CD4-positive, alpha-beta memory T cell (primary cell): ENCODE measurements at regions of chr22 and their contacts with region 1.

Region 1: GRCh38 chr22:24433813-24434470 is 6.5 kb downstream of the ADORA2A start:
- DNase-seq: peak in 1 of 5 donors; percentile 85
- H3K4me3 ChIP-seq: no peak overlapping the region
- H3K4me3 Mint-ChIP-seq: peak overlapping the region; percentile 52 to 88 (median 70)
- H3K27ac ChIP-seq: peak overlapping the region; percentile 59
- H3K27ac Mint-ChIP-seq: peak overlapping the region; percentile 87 to 100 (median 92)
- H3K4me1 ChIP-seq: peaks cover 89% of the 10 kb centered on the region
- H3K4me1 Mint-ChIP-seq: peaks cover 41 to 92% (median 75%) of the 10 kb centered on the region in 4 donors
- H3K27me3 ChIP-seq: no peaks in the 10 kb centered on the region
- H3K27me3 Mint-ChIP-seq: peaks cover 0 to 3% of the 10 kb centered on the region in 2 donors

Region 2: DNA sequence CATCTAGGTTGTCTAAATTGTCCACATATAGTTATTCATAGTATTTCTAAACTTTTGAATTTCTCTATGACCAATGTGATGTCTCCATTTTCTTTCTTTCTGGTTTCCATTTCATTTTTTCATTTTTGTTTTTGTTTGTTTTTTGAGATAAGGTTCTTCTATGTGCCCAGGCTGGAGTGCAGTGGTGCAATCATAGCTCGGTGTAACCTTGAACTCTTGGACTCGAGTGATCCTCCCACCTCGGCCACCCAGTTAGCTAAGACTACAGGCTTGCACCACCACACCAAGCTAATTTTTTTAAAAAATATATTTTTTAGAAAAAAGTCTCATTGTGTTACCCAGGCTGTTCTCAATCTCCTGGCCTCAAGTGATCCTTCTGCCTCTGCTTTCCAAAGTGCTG is 436.9 kb before region 1 on chr22:
- CTCF ChIA-PET with region 1: no interaction called
- POLR2A ChIA-PET with region 1: no interaction called
- intact Hi-C with region 1: no loop called
- DNase-seq: no peak
- H3K4me3 ChIP-seq: no peak overlapping the region
- H3K4me3 Mint-ChIP-seq: no peak overlapping the region
- H3K27ac ChIP-seq: no peak overlapping the region
- H3K27ac Mint-ChIP-seq: peak overlapping the region in 1 of 7 donors; percentile 11
- H3K4me1 ChIP-seq: no peaks in the 10 kb centered on the region
- H3K4me1 Mint-ChIP-seq: peaks cover 0 to 3% (median 0%) of the 10 kb centered on the region in 4 donors
- H3K27me3 ChIP-seq: no peaks in the 10 kb centered on the region
- H3K27me3 Mint-ChIP-seq: peaks cover 0 to 1% of the 10 kb centered on the region in 2 donors

Region 3: GRCh38 chr22:24011735-24012068 is 422.2 kb before region 1 on chr22:
- CTCF ChIA-PET with region 1: no interaction called
- POLR2A ChIA-PET with region 1: no interaction called
- intact Hi-C with region 1: loop called (anchors 5 kb)
- DNase-seq: peak in 1 of 5 donors; percentile 6
- H3K4me3 ChIP-seq: peak overlapping the region; percentile 68 to 86
- H3K4me3 Mint-ChIP-seq: peak overlapping the region; percentile 94 to 98 (median 98)
- H3K27ac ChIP-seq: peak overlapping the region; percentile 78
- H3K27ac Mint-ChIP-seq: peak overlapping the region; percentile 94 to 99 (median 97)
- H3K4me1 ChIP-seq: peaks cover 23% of the 10 kb centered on the region
- H3K4me1 Mint-ChIP-seq: peaks cover 26 to 57% (median 35%) of the 10 kb centered on the region in 4 donors
- H3K27me3 ChIP-seq: no peaks in the 10 kb centered on the region
- H3K27me3 Mint-ChIP-seq: peaks cover 0 to 5% of the 10 kb centered on the region in 2 donors

Region 4: GRCh38 chr22:24445481-24446259 is 11.7 kb after region 1 on chr22:
- CTCF ChIA-PET with region 1: no interaction called
- POLR2A ChIA-PET with region 1: interaction called, 10 read pairs
- intact Hi-C with region 1: no loop called
- DNase-seq: no peak
- H3K4me3 ChIP-seq: no peak overlapping the region
- H3K4me3 Mint-ChIP-seq: no peak overlapping the region
- H3K27ac ChIP-seq: no peak overlapping the region
- H3K27ac Mint-ChIP-seq: no peak overlapping the region
- H3K4me1 ChIP-seq: no peaks in the 10 kb centered on the region
- H3K4me1 Mint-ChIP-seq: peaks cover 7 to 25% (median 13%) of the 10 kb centered on the region in 4 donors
- H3K27me3 ChIP-seq: no peaks in the 10 kb centered on the region
- H3K27me3 Mint-ChIP-seq: no peaks in the 10 kb centered on the region

Region 5: GRCh38 chr22:24492391-24492790 is 58.4 kb after region 1 on chr22:
- CTCF ChIA-PET with region 1: no interaction called
- POLR2A ChIA-PET with region 1: no interaction called
- intact Hi-C with region 1: no loop called
- DNase-seq: no peak
- H3K4me3 ChIP-seq: no peak overlapping the region
- H3K4me3 Mint-ChIP-seq: no peak overlapping the region
- H3K27ac ChIP-seq: no peak overlapping the region
- H3K27ac Mint-ChIP-seq: no peak overlapping the region
- H3K4me1 ChIP-seq: no peaks in the 10 kb centered on the region
- H3K4me1 Mint-ChIP-seq: peaks cover 0 to 3% (median under 1%) of the 10 kb centered on the region in 4 donors
- H3K27me3 ChIP-seq: peaks cover 5% of the 10 kb centered on the region
- H3K27me3 Mint-ChIP-seq: peaks cover 9 to 10% of the 10 kb centered on the region in 2 donors

Region 6: GRCh38 chr22:24503137-24503842 is 69.3 kb after region 1 on chr22:
- CTCF ChIA-PET with region 1: interaction called, 12 read pairs
- POLR2A ChIA-PET with region 1: no interaction called
- intact Hi-C with region 1: no loop called
- DNase-seq: peak; percentile 41 to 47 (median 45)
- H3K4me3 ChIP-seq: no peak overlapping the region
- H3K4me3 Mint-ChIP-seq: no peak overlapping the region
- H3K27ac ChIP-seq: no peak overlapping the region
- H3K27ac Mint-ChIP-seq: peak overlapping the region in 2 of 7 donors; percentile 1 to 25
- H3K4me1 ChIP-seq: no peaks in the 10 kb centered on the region
- H3K4me1 Mint-ChIP-seq: peaks cover 0 to 4% (median 2%) of the 10 kb centered on the region in 4 donors
- H3K27me3 ChIP-seq: no peaks in the 10 kb centered on the region
- H3K27me3 Mint-ChIP-seq: no peaks in the 10 kb centered on the region

Region 7: DNA sequence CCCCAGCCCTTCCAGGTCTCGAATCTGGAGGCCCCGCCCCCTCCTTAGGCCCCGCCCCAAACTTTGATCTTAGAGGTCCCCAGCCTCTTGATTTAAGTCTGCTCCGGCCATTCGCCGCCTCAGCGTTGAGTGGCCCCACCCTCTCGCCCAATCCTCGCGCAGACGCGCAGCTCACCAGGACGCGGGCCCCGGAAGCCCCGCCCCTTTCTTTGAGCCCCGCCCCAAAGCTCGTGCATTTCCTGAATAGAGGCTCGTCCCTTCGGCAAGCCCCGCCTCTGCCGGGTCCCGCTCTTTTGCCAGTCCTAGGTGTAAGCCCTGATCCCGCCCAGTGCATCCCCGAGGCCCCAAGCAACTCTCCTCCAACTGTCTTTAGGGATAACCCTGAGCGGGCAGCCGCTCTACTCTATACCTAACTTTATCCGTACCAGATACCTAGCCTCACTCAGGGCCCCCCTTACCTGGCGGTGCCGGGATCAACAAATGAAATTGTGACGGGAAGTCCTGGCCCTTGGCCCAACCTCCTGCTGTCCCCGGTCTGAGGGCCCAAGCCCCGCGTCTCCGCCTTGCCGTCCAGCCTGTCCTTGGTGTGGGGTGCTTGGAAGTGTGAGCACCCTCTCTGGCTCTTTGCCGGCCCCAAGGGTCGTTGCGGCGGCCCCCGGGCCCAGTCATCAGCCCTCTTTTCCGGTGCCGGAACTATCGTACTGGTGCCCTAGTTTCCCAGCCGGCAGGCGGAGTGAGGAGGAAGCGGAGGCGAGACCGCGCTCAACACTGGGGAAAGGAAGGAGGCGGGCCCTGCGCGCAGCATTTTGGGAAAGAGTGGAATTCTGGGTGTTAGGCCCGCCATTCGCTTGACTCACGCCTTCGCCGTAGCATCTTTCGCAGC is 121.5 kb after region 1 on chr22 and contains the start of gene SNRPD3:
- CTCF ChIA-PET with region 1: no interaction called
- POLR2A ChIA-PET with region 1: interaction called, 10 read pairs
- intact Hi-C with region 1: loop called (anchors 1 kb)
- DNase-seq: peak; percentile 96 to 100 (median 98)
- H3K4me3 ChIP-seq: peak within 1 kb of the TSS; percentile 76 to 100
- H3K4me3 Mint-ChIP-seq: peak within 1 kb of the TSS; percentile 97 to 99 (median 98)
- H3K27ac ChIP-seq: peak within 1 kb of the TSS; percentile 87
- H3K27ac Mint-ChIP-seq: peak within 1 kb of the TSS; percentile 95 to 99 (median 99)
- H3K4me1 ChIP-seq: peaks cover 52% of the 10 kb centered on the region
- H3K4me1 Mint-ChIP-seq: peaks cover 48 to 72% (median 59%) of the 10 kb centered on the region in 4 donors
- H3K27me3 ChIP-seq: no peaks in the 10 kb centered on the region
- H3K27me3 Mint-ChIP-seq: no peaks in the 10 kb centered on the region
- total RNA-seq, gene SNRPD3: 77.6 to 85.0 TPM